ENCODE measurements at regions of chr3 and their contacts with region 1.

Region 1: GRCh38 chr3:192802957-192803899 is 75.9 kb upstream of the FGF12 start:
- DNase-seq: no peak
- H3K4me3 ChIP-seq: no peak overlapping the region
- H3K27ac ChIP-seq: no peak overlapping the region
- H3K4me1 ChIP-seq: no peaks in the 10 kb centered on the region
- H3K27me3 ChIP-seq: no peaks in the 10 kb centered on the region
- CTCF ChIP-seq: peak in 3 of 4 experiments; percentile 53 to 65 (median 59)
- POLR2A ChIP-seq: no peak

Region 2: DNA sequence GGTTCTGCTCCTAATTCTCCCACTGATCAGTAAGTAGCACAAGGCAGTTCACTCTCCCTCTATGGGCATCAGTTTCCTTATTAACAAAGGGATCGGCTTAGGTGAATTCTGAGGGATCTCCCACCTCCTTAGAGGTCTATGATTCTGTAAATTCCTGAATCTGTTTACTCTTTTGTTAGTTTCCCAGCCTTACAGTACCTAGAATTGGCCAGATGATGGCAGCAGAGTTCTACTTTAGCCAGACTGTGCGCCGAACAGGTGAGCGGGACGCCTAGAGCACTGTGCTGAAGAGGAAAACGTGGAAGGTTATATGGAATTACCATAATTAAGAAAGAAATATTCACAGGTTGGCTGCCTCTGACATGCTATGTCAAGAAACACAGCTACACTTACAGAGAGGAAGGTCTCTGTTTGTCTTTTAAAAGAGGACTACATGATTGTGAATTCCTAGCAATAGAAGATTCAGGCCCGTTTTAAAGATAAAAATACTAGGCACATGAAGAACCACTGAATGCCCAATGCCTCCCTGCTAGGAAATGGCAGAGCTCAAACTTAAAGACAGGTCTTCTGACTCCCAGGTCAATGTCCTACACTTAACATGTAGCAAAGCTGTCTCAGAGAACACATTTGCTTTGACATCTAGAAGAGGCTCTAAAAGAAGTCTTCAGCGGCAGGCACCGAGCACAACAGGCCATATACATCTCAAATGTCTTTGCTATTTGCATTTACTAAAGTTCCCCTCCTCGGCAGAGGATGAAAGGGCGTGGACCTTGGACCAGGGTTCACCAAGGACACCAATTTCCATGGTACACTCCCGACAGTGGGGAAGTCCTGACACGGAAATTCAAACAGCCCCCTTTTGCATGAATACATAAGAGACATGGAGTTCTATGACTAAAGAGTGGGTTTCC is 335.7 kb before region 1 on chr3:
- intact Hi-C with region 1: loop called (anchors 5 kb)
- DNase-seq: peak; percentile 52
- H3K4me3 ChIP-seq: no peak overlapping the region
- H3K27ac ChIP-seq: no peak overlapping the region
- H3K4me1 ChIP-seq: no peaks in the 10 kb centered on the region
- H3K27me3 ChIP-seq: peaks cover 5% of the 10 kb centered on the region
- CTCF ChIP-seq: peak; percentile 34 to 84 (median 68)
- POLR2A ChIP-seq: no peak

Region 3: GRCh38 chr3:192566706-192567290 is 236.4 kb before region 1 on chr3:
- intact Hi-C with region 1: loop called (anchors 2 kb)
- DNase-seq: peak; percentile 85
- H3K4me3 ChIP-seq: no peak overlapping the region
- H3K27ac ChIP-seq: no peak overlapping the region
- H3K4me1 ChIP-seq: no peaks in the 10 kb centered on the region
- H3K27me3 ChIP-seq: no peaks in the 10 kb centered on the region
- CTCF ChIP-seq: peak; percentile 48 to 91 (median 84)
- POLR2A ChIP-seq: no peak